WTC11 (cell line): ENCODE measurements at regions of chr6 and their contacts with region 1.

Region 1: DNA sequence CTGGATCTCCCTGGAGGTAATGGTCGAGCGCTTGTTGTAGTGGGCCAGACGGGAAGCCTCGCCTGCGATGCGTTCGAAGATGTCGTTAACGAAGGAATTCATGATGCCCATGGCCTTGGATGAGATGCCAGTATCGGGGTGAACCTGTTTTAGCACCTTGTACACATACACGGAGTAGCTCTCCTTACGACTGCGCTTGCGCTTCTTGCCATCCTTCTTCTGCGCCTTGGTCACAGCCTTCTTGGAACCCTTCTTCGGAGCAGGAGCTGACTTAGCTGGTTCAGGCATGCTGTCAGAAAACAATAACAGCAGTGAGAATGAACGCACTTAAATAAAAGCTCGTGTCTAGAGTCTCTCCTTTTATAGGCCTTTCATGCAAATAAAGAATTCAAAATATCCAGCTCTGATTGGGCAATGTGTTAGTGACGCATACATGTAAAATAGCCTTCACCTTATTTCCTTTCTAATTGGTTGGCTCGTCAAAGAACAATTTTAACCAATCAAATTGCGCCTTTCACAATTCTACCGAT is 129.2 kb downstream of the HFE start:
- DNase-seq: no peak
- ATAC-seq: peak; percentile 53
- H3K4me3 Mint-ChIP-seq: no peak overlapping the region
- H3K27ac Mint-ChIP-seq: no peak overlapping the region
- H3K4me1 Mint-ChIP-seq: peaks cover 36% of the 10 kb centered on the region
- H3K27me3 Mint-ChIP-seq: no peaks in the 10 kb centered on the region
- CTCF ChIP-seq: no peak

Region 2: DNA sequence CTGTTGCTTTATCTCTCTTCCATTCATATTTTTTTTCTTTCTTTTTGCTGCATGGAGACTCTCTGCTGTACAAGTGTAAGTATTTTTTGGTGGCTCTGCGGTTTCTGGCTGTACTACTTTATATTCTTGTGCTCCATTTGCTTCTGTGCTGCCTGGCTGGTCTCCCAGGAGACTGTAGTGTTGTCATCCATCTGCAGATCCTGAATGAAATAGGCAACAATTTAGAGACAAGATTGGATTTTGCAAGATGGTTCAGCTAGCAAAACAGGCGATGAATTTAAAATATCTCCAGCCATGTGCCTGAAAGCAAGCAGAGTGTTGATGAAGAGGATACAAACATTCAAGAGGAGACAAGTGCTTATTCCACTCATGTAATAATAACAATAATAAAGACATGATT is 639.5 kb before region 1 on chr6:
- CTCF ChIA-PET with region 1: no interaction called
- POLR2A ChIA-PET with region 1: no interaction called
- DNase-seq: no peak
- ATAC-seq: no peak
- H3K4me3 Mint-ChIP-seq: no peak overlapping the region
- H3K27ac Mint-ChIP-seq: peak overlapping the region; percentile 38; the same call in 1 of the 2 replicates
- H3K4me1 Mint-ChIP-seq: no peaks in the 10 kb centered on the region
- H3K27me3 Mint-ChIP-seq: no peaks in the 10 kb centered on the region
- CTCF ChIP-seq: no peak

Region 3: DNA sequence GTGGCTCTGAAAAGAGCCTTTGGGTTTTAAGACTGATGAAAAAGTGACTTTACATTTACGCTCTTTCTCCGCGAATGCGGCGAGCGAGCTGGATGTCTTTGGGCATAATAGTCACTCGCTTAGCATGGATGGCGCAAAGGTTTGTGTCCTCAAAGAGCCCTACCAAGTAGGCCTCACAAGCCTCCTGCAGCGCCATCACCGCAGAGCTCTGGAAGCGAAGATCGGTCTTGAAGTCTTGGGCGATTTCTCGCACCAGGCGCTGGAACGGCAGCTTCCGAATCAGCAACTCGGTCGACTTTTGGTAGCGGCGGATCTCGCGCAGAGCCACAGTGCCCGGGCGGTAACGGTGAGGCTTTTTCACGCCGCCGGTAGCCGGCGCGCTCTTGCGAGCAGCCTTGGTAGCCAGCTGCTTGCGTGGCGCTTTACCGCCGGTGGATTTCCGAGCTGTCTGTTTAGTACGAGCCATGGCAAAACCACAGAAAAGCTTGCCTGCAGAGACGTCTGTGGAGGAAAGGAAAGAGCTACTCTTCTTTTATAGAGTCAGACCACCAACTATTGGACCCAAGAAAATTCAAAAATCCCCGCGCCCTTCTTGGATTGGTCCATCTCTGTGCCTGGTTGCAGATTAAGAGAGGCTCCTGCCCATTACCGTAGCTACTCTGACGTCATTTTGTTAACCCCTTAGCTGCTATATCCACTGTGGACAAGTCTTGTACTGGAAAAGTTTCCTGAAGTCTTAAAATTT is 184.7 kb before region 1 on chr6:
- CTCF ChIA-PET with region 1: no interaction called
- POLR2A ChIA-PET with region 1: interaction called, 116 read pairs
- DNase-seq: peak; percentile 80
- ATAC-seq: peak; percentile 67
- H3K4me3 Mint-ChIP-seq: peak overlapping the region; percentile 91
- H3K27ac Mint-ChIP-seq: peak overlapping the region; percentile 100
- H3K4me1 Mint-ChIP-seq: peaks cover 59% of the 10 kb centered on the region
- H3K27me3 Mint-ChIP-seq: no peaks in the 10 kb centered on the region
- CTCF ChIP-seq: no peak

Region 4: GRCh38 chr6:26122793-26123674 is 93.4 kb before region 1 on chr6:
- CTCF ChIA-PET with region 1: no interaction called
- POLR2A ChIA-PET with region 1: interaction called, 132 read pairs
- DNase-seq: peak; percentile 89
- ATAC-seq: peak; percentile 51
- H3K4me3 Mint-ChIP-seq: peak overlapping the region; percentile 95
- H3K27ac Mint-ChIP-seq: peak overlapping the region; percentile 99
- H3K4me1 Mint-ChIP-seq: peaks cover 40% of the 10 kb centered on the region
- H3K27me3 Mint-ChIP-seq: no peaks in the 10 kb centered on the region
- CTCF ChIP-seq: no peak

Region 5: DNA sequence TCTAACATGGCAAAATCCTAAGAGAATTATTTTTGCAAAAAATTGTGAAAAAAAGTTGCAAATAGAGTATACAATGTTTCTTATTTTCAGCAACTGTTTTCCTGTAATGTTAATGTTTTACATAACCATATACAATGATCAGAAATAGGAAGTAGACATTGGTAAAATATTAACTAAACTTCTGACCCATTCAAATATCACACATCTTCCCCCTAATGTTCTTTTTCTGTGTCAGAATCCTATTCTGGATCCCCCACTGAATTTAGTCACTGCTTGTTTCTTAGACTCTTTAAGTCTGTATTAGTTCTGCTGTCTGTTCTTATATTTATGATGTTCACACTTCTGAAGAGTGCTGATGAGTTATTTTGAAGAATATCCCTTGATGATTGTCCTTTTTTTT is 67.2 kb before region 1 on chr6:
- CTCF ChIA-PET with region 1: no interaction called
- POLR2A ChIA-PET with region 1: no interaction called
- DNase-seq: no peak
- ATAC-seq: no peak
- H3K4me3 Mint-ChIP-seq: no peak overlapping the region
- H3K27ac Mint-ChIP-seq: no peak overlapping the region
- H3K4me1 Mint-ChIP-seq: peaks cover 3% of the 10 kb centered on the region; the same call in 1 of the 2 replicates
- H3K27me3 Mint-ChIP-seq: no peaks in the 10 kb centered on the region
- CTCF ChIP-seq: no peak

Region 6: GRCh38 chr6:26196846-26197648 is 19.4 kb before region 1 on chr6:
- CTCF ChIA-PET with region 1: interaction called, 3 read pairs
- POLR2A ChIA-PET with region 1: interaction called, 383 read pairs
- DNase-seq: peak; percentile 75
- ATAC-seq: peak; percentile 43
- H3K4me3 Mint-ChIP-seq: peak overlapping the region; percentile 99
- H3K27ac Mint-ChIP-seq: peak overlapping the region; percentile 100
- H3K4me1 Mint-ChIP-seq: peaks cover 39% of the 10 kb centered on the region
- H3K27me3 Mint-ChIP-seq: no peaks in the 10 kb centered on the region
- CTCF ChIP-seq: no peak

Region 7: GRCh38 chr6:26258200-26258977 is 42.0 kb after region 1 on chr6:
- CTCF ChIA-PET with region 1: no interaction called
- POLR2A ChIA-PET with region 1: interaction called, 12 read pairs
- DNase-seq: no peak
- ATAC-seq: peak; percentile 40
- H3K4me3 Mint-ChIP-seq: no peak overlapping the region
- H3K27ac Mint-ChIP-seq: peak overlapping the region; percentile 44; the same call in 1 of the 2 replicates
- H3K4me1 Mint-ChIP-seq: peaks cover 34% of the 10 kb centered on the region
- H3K27me3 Mint-ChIP-seq: no peaks in the 10 kb centered on the region
- CTCF ChIP-seq: no peak

Region 8: GRCh38 chr6:27138837-27139755 is 922.7 kb after region 1 on chr6:
- CTCF ChIA-PET with region 1: no interaction called
- POLR2A ChIA-PET with region 1: interaction called, 25 read pairs
- DNase-seq: peak; percentile 77
- ATAC-seq: peak; percentile 70
- H3K4me3 Mint-ChIP-seq: peak overlapping the region; percentile 97
- H3K27ac Mint-ChIP-seq: peak overlapping the region; percentile 99
- H3K4me1 Mint-ChIP-seq: peaks cover 59% of the 10 kb centered on the region
- H3K27me3 Mint-ChIP-seq: no peaks in the 10 kb centered on the region
- CTCF ChIP-seq: no peak

Region 9: DNA sequence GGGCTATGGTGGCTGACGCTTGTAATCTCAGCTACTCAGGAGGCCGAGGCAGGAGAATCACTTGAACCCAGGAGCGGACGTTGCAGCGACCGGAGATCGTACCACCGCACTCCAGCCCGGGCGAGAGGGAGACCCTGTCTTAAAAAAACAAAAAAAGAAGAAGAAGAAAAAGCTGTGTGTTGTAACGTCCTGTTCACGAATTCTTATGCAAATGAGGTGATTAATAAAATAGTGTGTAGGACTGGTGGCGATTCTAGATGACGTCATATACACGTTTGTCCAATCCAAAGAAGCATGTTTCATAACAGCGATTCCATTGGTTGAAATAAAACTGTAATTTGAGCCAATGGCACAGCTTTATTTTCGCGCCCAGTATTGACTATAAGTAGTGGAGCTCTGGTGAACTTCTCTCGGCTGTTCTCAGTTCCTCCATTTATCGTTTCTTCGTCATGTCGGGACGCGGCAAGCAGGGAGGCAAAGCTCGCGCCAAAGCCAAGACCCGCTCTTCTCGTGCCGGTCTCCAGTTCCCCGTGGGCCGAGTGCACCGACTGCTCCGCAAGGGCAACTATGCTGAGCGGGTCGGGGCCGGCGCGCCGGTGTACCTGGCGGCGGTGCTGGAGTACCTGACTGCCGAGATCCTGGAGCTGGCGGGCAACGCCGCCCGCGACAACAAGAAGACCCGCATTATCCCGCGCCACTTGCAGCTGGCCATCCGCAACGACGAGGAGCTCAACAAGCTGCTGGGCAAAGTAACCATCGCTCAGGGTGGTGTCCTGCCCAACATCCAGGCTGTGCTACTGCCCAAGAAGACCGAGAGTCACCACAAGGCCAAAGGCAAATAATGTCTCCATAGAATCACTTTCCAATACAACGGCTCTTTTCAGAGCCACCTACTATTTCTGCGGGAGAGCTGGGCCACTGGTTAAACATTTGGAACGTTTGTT is 1648.8 kb after region 1 on chr6:
- CTCF ChIA-PET with region 1: no interaction called
- POLR2A ChIA-PET with region 1: interaction called, 49 read pairs
- DNase-seq: peak; percentile 73
- ATAC-seq: peak; percentile 51
- H3K4me3 Mint-ChIP-seq: peak overlapping the region; percentile 97
- H3K27ac Mint-ChIP-seq: peak overlapping the region; percentile 100
- H3K4me1 Mint-ChIP-seq: peaks cover 25% of the 10 kb centered on the region
- H3K27me3 Mint-ChIP-seq: peaks cover 4% of the 10 kb centered on the region; the same call in 1 of the 2 replicates
- CTCF ChIP-seq: no peak